ENCODE measurements at regions of chr19 and their contacts with region 1.

Region 1: GRCh38 chr19:11242864-11243797 is 3.7 kb downstream of the ANGPTL8 start:
- DNase-seq: peak; percentile 93 to 95
- ATAC-seq: peak; percentile 86 to 93 (median 90)
- H3K4me3 ChIP-seq: no peak overlapping the region
- H3K27ac ChIP-seq: no peak overlapping the region
- H3K4me1 ChIP-seq: peaks cover 6% of the 10 kb centered on the region
- H3K27me3 ChIP-seq: peaks cover 0 to 5% (median 0%) of the 10 kb centered on the region in 3 donors
- CTCF ChIP-seq: peak; percentile 60

Region 2: DNA sequence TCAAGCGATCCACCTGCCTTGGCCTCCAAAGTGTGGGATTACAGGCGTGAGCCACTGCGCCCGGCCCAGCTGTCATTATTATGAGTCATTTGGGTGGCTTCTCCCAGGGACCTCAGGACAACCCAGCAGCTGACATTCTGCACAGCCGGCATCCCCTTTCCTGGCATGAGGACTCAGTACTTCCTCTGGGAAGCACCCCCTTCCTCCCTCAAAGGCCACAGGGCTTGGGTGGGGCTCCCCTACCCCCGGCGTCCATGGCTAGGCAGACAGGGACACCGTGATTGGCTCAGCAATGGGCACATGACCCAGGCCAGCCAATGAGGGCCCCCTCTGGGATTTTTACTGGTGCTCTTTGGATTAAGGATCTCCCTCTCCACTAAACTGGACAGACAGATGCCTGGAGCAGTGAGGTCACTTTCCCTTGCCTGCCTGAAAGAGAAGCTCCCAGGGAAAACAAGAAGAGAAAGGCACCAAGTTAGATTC is 51.8 kb before region 1 on chr19:
- intact Hi-C with region 1: no loop called
- DNase-seq: peak; percentile 88 to 91
- ATAC-seq: peak; percentile 86 to 94 (median 92)
- H3K4me3 ChIP-seq: no peak overlapping the region
- H3K27ac ChIP-seq: peak overlapping the region; percentile 73
- H3K4me1 ChIP-seq: peaks cover 23% of the 10 kb centered on the region
- H3K27me3 ChIP-seq: no peaks in the 10 kb centered on the region
- CTCF ChIP-seq: no peak

Region 3: DNA sequence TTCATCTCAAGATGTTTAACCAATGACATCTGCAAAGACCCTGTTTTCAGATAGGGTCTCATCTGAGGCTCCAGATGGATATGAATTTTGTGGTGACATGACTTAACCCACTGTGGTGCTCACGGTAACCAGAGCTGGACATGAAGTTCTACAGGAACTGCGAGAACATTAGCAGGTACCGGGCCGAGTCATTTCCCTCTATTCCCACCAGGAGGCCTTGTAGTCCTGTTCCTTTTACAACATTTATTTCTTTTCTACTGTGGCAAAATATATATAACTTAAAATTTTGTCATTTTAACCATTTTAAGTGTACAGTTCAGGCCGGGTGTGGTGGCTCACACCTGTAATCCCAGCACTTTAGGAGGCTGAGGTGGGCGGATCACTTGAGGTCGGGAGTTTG is 45.2 kb after region 1 on chr19:
- intact Hi-C with region 1: loop called in 1 of 2 experiments (anchors 5 kb)
- DNase-seq: no peak
- ATAC-seq: no peak
- H3K4me3 ChIP-seq: no peak overlapping the region
- H3K27ac ChIP-seq: no peak overlapping the region
- H3K4me1 ChIP-seq: no peaks in the 10 kb centered on the region
- H3K27me3 ChIP-seq: peaks cover 0 to 26% (median 0%) of the 10 kb centered on the region in 3 donors
- CTCF ChIP-seq: peak; percentile 27